Ascending aorta (tissue), 2 donors: ENCODE measurements at regions of chr13 and their contacts with region 1.

Region 1: GRCh38 chr13:30865123-30866049 is 40.7 kb upstream of the MEDAG start:
- DNase-seq: peak in 1 of 2 donors; percentile 90
- H3K4me3 ChIP-seq: peak overlapping the region in 1 of 2 donors; percentile 4
- H3K27ac ChIP-seq: peak overlapping the region; percentile 87 to 97
- H3K4me1 ChIP-seq: peaks cover 7 to 46% of the 10 kb centered on the region in 2 donors
- H3K27me3 ChIP-seq: no peaks in the 10 kb centered on the region
- CTCF ChIP-seq: peak; percentile 93 to 94 (median 94)

Region 2: DNA sequence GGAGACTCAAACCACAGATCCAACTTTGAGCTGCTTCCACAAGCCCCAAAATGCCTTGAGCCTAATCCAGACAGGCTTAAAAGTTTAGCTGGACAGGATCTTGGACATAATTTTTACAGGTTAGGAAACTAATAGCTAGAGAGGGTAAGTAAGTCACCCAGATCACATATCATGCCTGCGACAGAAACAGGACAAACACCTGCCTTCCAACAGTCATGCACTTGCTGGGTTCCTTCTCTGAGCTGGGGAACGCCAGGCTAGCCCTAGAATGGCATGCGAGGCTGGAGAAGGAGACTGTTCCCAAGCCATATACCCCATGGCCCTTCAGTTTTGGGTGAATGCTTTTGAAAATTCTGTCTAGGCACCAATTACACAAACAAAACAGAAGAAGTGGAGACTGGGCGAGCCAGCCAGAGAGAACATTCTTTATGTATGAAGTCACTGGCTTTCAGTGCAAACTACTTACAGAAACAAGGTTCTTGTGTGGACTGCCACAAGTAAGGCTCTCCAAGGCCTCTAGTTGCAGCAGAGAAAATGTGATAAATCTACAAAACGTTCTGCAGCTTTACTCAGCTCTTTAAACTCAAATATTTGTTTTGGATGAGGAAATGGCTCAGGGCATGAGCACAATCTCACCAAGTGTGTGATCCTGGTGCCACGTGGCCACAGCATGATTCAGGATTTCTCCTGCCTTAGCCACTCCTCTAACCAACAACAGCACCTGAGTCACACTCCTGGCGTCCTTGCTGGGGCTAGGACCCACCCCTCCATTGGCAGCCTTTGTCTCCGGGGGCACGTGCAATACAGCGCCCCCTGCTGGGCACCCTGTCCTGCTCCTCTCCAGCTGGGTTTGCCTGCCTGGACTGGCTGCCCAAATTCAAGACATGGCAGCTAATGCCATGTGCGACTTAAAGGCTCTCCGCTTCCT is 941.6 kb before region 1 on chr13:
- intact Hi-C with region 1: loop called (anchors 10 kb)
- DNase-seq: peak; percentile 81 to 96
- H3K4me3 ChIP-seq: no peak overlapping the region
- H3K27ac ChIP-seq: peak overlapping the region; percentile 85 to 93
- H3K4me1 ChIP-seq: peaks cover 15 to 36% of the 10 kb centered on the region in 2 donors
- H3K27me3 ChIP-seq: no peaks in the 10 kb centered on the region
- CTCF ChIP-seq: peak; percentile 80 to 92 (median 91)

Region 3: DNA sequence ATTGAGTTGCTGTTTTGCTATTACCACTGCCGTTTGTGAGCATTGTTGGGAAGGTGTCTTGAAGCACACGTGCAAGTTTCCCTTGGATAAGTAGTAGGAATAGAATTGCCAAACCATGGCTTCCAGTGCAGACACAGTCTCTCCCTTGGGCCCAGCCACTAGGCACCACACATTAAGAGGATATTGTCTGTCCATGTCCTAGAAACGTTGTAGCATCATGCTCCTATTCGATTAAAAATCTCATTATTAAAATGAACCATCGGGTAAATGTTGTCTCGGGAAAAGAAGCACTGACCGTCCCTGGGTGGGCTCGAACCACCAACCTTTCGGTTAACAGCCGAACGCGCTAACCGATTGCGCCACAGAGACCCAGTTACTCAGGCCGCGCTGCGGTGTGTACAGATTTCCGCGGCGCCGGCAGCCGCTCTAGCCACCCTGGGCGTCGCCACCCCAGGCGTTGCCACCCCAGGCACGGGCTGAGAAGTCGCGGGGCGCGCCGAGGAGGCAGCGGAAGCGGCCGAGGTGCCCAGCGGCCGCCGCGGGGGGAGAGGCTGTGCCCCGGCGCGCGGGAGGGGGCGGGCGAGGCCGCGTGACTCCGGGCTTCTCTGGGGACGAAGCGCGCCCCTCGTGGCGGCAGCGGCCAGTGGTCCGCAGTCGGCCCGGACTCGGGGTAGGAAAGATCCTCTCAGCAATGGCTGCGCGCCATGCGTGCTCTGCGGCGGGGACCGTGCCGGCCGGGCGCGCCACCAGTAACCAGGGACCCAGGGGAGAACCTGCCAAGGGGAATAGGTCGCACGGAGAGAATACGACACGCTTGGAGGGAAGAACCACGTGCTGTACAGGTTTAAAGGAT is 191.5 kb before region 1 on chr13:
- intact Hi-C with region 1: loop called (anchors 5 kb)
- DNase-seq: peak; percentile 79 to 96
- H3K4me3 ChIP-seq: peak overlapping the region; percentile 53 to 64
- H3K27ac ChIP-seq: peak overlapping the region; percentile 59 to 88
- H3K4me1 ChIP-seq: no peaks in the 10 kb centered on the region
- H3K27me3 ChIP-seq: no peaks in the 10 kb centered on the region
- CTCF ChIP-seq: peak; percentile 58 to 81 (median 61)

Region 4: DNA sequence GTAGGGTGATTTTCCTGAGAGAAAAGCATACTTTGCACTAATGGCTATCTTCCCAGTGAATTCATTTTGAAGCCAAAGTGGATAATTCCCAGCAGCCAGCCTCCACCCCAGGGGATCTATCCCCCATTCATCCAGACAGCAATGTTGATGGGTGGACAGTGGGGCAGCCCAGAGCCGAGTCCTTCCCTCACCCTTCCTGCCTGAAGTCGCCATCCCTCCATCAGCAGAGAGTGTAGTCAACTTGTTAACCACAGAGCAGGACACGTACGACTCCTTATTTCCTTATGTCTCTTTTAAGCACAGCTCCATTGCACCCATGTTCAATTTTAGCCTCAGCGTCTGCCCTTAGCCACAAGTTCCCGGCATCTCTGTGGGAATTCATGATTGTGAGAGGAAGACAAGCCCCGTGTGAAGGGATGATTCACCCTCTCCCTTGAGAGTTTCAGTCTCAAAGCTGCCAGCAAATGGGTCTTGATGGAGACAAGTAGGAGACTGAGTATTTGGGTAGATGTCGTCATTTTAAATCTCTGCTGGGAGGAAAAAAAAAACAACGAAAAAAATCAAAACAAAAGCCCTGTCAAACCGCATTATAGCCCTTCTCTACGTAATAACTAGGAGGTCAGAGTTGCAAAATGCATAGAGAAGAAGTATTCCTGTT is 17.6 kb before region 1 on chr13:
- intact Hi-C with region 1: loop called (anchors 1 kb)
- DNase-seq: peak; percentile 48 to 90
- H3K4me3 ChIP-seq: peak overlapping the region in 1 of 2 donors; percentile 1
- H3K27ac ChIP-seq: peak overlapping the region; percentile 74 to 87
- H3K4me1 ChIP-seq: peaks cover 0 to 7% of the 10 kb centered on the region in 2 donors
- H3K27me3 ChIP-seq: no peaks in the 10 kb centered on the region
- CTCF ChIP-seq: no peak

Region 5: GRCh38 chr13:30905932-30906383 is 40.6 kb after region 1 on chr13 and contains the start of gene MEDAG:
- intact Hi-C with region 1: loop called (anchors 2 kb)
- DNase-seq: peak; percentile 76 to 96
- H3K4me3 ChIP-seq: peak within 1 kb of the TSS; percentile 56 to 81
- H3K27ac ChIP-seq: peak within 1 kb of the TSS; percentile 95 to 98
- H3K4me1 ChIP-seq: peaks cover 0 to 21% of the 10 kb centered on the region in 2 donors
- H3K27me3 ChIP-seq: no peaks in the 10 kb centered on the region
- CTCF ChIP-seq: no peak
- total RNA-seq, gene MEDAG: 98.8 TPM

Region 6: GRCh38 chr13:32125221-32125631 is 1259.8 kb after region 1 on chr13:
- intact Hi-C with region 1: loop called (anchors 10 kb)
- DNase-seq: peak in 1 of 2 donors; percentile 79
- H3K4me3 ChIP-seq: no peak overlapping the region
- H3K27ac ChIP-seq: peak overlapping the region; percentile 85 to 91
- H3K4me1 ChIP-seq: peaks cover 3 to 16% of the 10 kb centered on the region in 2 donors
- H3K27me3 ChIP-seq: no peaks in the 10 kb centered on the region
- CTCF ChIP-seq: no peak